Kidney (tissue), 22 donors: ENCODE measurements at regions of chr6 and their contacts with region 1.

Region 1: DNA sequence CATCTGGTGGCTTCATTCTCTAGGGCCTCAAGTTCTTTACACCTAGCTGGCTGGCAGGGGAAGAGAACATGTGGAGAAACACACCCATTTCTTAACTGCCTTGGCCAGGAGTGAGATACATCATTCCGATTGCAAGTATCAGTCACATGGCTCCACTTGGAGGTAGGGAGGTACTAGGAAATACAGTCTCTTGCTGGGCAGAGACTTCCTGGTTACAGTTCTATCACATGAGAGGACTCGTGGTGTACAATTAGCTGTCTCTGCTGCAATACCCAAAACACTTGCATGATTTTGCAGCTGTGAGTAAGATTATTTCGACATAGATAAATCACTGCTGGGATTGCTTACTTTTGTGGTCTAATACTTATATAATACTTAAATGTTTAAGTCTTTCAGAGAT is 51.1 kb downstream of the GTF2H5 start:
- DNase-seq: no peak
- H3K4me3 ChIP-seq: no peak overlapping the region
- H3K27ac ChIP-seq: no peak overlapping the region
- H3K4me1 ChIP-seq: no peaks in the 10 kb centered on the region
- H3K27me3 ChIP-seq: no peaks in the 10 kb centered on the region
- CTCF ChIP-seq: no peak

Region 2: GRCh38 chr6:158605266-158605878 is 386.1 kb after region 1 on chr6:
- intact Hi-C with region 1: loop called (anchors 5 kb)
- DNase-seq: peak in 4 of 5 donors; percentile 68 to 85 (median 80)
- H3K4me3 ChIP-seq: no peak overlapping the region
- H3K27ac ChIP-seq: no peak overlapping the region
- H3K4me1 ChIP-seq: no peaks in the 10 kb centered on the region
- H3K27me3 ChIP-seq: no peaks in the 10 kb centered on the region
- CTCF ChIP-seq: peak; percentile 83